ENCODE measurements at regions of chr9 and their contacts with region 1.

Region 1: GRCh38 chr9:12884737-12885414 is 110.1 kb downstream of the LURAP1L start:
- DNase-seq: peak; percentile 84
- ATAC-seq: peak; percentile 89
- H3K4me3 ChIP-seq: no peak overlapping the region
- H3K27ac ChIP-seq: peak overlapping the region; percentile 44; the same call in 1 of the 2 replicates
- H3K4me1 ChIP-seq: peaks cover 18% of the 10 kb centered on the region
- H3K27me3 ChIP-seq: no peaks in the 10 kb centered on the region
- CTCF ChIP-seq: peak; percentile 82

Region 2: GRCh38 chr9:12702160-12702758 is 182.6 kb before region 1 on chr9:
- CTCF ChIA-PET with region 1: interaction called, 3 read pairs
- POLR2A ChIA-PET with region 1: no interaction called
- intact Hi-C with region 1: loop called (anchors 5 kb)
- DNase-seq: peak; percentile 70
- ATAC-seq: peak; percentile 54
- H3K4me3 ChIP-seq: peak overlapping the region; percentile 52; the same call in 1 of the 2 replicates
- H3K27ac ChIP-seq: no peak overlapping the region
- H3K4me1 ChIP-seq: peaks cover 17% of the 10 kb centered on the region
- H3K27me3 ChIP-seq: no peaks in the 10 kb centered on the region
- CTCF ChIP-seq: peak; percentile 81

Region 3: DNA sequence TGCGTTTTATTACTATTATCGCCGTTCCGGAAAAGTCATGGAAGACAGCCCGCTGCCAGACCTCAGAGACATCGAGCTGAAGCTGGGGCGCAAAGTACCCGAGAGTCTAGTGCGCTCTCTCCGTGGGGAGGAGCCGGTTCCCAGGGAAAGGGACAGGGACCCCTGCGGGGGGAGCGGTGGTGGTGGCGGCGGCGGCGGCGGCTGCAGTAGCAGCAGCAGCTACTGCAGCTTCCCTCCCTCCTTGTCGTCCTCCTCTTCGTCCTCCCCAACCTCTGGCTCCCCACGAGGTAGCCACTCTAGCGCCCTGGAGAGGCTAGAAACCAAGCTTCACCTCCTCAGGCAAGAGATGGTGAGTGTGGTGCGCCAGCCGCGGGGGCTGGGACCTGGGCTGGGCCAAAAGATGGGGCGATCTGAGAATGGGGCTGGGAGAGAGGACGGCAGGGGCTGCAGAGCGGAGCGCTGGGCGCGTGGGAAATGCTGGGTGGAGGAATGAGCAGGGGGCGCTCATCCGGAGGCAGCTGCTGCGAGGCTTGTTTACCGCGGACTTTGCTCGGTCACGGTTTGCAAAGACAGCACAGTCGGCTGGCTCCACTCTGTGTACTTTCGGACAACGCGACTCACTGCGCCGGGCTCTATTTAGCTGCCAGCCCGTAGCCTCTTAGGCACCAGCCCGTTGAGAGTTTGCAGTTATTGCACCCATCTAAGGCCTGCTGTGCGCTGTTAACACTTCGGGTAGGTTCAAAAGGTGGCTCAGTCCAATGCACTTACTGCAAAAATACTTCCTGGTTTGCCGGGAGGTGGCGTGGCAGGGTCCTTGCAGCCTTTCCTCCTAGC is 109.0 kb before region 1 on chr9:
- CTCF ChIA-PET with region 1: interaction called, 11 read pairs
- POLR2A ChIA-PET with region 1: no interaction called
- intact Hi-C with region 1: loop called (anchors 1 kb)
- DNase-seq: peak; percentile 74
- ATAC-seq: peak; percentile 76
- H3K4me3 ChIP-seq: peak overlapping the region; percentile 86
- H3K27ac ChIP-seq: peak overlapping the region; percentile 92
- H3K4me1 ChIP-seq: peaks cover 25% of the 10 kb centered on the region
- H3K27me3 ChIP-seq: no peaks in the 10 kb centered on the region
- CTCF ChIP-seq: peak; percentile 59

Region 4: GRCh38 chr9:12813960-12814876 is 70.7 kb before region 1 on chr9:
- CTCF ChIA-PET with region 1: interaction called, 7 read pairs
- POLR2A ChIA-PET with region 1: no interaction called
- intact Hi-C with region 1: loop called (anchors 1 kb)
- DNase-seq: peak; percentile 93
- ATAC-seq: peak; percentile 62
- H3K4me3 ChIP-seq: peak overlapping the region; percentile 35
- H3K27ac ChIP-seq: peak overlapping the region; percentile 100
- H3K4me1 ChIP-seq: peaks cover 65% of the 10 kb centered on the region
- H3K27me3 ChIP-seq: no peaks in the 10 kb centered on the region
- CTCF ChIP-seq: no peak

Region 5: GRCh38 chr9:12874395-12874794 is 10.5 kb before region 1 on chr9:
- CTCF ChIA-PET with region 1: interaction called, 11 read pairs
- POLR2A ChIA-PET with region 1: no interaction called
- intact Hi-C with region 1: no loop called
- DNase-seq: no peak
- ATAC-seq: no peak
- H3K4me3 ChIP-seq: no peak overlapping the region
- H3K27ac ChIP-seq: no peak overlapping the region
- H3K4me1 ChIP-seq: peaks cover 25% of the 10 kb centered on the region
- H3K27me3 ChIP-seq: no peaks in the 10 kb centered on the region
- CTCF ChIP-seq: no peak

Region 6: DNA sequence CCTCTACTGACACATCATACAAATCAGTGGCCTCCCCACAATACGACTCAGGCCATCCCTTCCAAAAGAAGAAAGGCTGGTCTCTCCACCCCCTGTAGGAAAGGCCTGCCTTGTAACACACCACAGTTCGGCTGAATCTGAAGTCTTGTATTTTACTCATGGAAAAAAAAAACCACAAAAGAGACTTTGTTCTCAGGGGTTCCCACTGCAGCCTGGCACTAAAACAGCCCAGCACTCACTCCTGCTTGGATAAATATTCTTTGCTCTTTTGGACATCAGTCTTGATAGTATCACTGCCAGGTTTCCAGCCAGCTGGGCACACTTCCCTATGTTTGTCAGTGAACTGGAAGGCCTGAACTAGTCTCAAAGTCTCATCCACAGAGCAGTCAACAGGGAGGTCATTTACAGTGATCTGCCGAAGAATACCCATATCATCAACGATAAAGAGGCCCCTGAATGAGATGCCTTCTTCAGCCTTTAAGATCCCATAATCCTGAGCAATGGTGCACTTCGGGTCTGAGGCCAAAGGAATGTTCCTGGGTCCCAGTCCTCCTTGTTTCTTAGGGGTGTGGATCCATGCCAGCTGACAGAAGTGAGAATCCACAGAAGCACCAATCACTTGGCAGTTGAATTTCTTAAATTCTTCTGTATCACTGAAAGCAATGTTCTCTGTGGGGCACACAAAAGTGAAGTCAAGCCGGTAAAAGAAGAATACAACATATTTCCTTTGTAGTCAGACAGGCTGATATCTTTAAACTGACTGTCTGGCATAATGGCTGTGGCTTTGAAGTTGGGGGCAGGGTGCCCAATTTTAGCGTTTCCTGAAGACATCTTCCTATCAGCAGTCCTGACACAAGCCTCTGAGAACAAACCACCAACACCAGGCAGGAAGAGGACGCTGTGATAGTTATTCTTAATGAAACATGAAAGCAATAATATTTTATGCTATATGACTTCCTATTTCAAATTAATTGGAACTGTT is 88.0 kb after region 1 on chr9:
- CTCF ChIA-PET with region 1: no interaction called
- POLR2A ChIA-PET with region 1: no interaction called
- intact Hi-C with region 1: no loop called
- DNase-seq: no peak
- ATAC-seq: no peak
- H3K4me3 ChIP-seq: no peak overlapping the region
- H3K27ac ChIP-seq: no peak overlapping the region
- H3K4me1 ChIP-seq: no peaks in the 10 kb centered on the region
- H3K27me3 ChIP-seq: no peaks in the 10 kb centered on the region
- CTCF ChIP-seq: no peak

Region 7: GRCh38 chr9:13088720-13089427 is 204.0 kb after region 1 on chr9:
- CTCF ChIA-PET with region 1: no interaction called
- POLR2A ChIA-PET with region 1: no interaction called
- intact Hi-C with region 1: loop called (anchors 1 kb)
- DNase-seq: peak; percentile 70
- ATAC-seq: peak; percentile 90
- H3K4me3 ChIP-seq: peak overlapping the region; percentile 51
- H3K27ac ChIP-seq: no peak overlapping the region
- H3K4me1 ChIP-seq: peaks cover 9% of the 10 kb centered on the region
- H3K27me3 ChIP-seq: no peaks in the 10 kb centered on the region
- CTCF ChIP-seq: peak; percentile 66

Region 8: GRCh38 chr9:13139641-13140171 is 254.8 kb after region 1 on chr9:
- CTCF ChIA-PET with region 1: no interaction called
- POLR2A ChIA-PET with region 1: no interaction called
- intact Hi-C with region 1: no loop called
- DNase-seq: peak; percentile 82
- ATAC-seq: peak; percentile 87
- H3K4me3 ChIP-seq: peak overlapping the region; percentile 49
- H3K27ac ChIP-seq: peak overlapping the region; percentile 54
- H3K4me1 ChIP-seq: peaks cover 30% of the 10 kb centered on the region
- H3K27me3 ChIP-seq: no peaks in the 10 kb centered on the region
- CTCF ChIP-seq: no peak